ENCODE measurements at regions of chrX and their contacts with region 1.

Region 1: DNA sequence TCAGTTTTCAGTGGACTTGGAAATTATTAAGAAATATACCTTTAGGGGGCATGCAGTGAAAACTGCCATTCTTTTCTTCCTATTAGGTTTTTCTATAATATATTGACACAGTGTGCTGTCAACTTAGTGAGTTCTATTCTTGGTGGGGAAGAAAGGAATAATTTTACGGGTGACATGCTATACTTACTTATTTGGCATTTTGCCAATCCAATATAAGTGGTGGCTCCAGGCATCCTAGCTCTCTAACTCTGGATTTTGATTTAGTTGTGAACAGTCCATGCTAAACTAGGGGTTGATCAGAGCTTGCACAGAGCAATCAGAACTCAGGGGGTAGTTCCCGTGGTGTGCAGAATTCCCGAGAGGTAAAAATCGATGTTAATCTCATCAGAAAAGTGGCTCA is 277.7 kb upstream of the FTHL17 start:
- DNase-seq: no peak
- H3K4me3 ChIP-seq: no peak overlapping the region
- H3K27ac ChIP-seq: no peak overlapping the region
- H3K4me1 ChIP-seq: no peaks in the 10 kb centered on the region
- H3K27me3 ChIP-seq: peaks cover 0 to 17% of the 10 kb centered on the region in 2 donors
- CTCF ChIP-seq: no peak
- POLR2A ChIP-seq: no peak

Region 2: GRCh38 chrX:31307952-31308351 is 41.6 kb before region 1 on chrX:
- intact Hi-C with region 1: loop called (anchors 2 kb)
- DNase-seq: no peak
- H3K4me3 ChIP-seq: no peak overlapping the region
- H3K27ac ChIP-seq: no peak overlapping the region
- H3K4me1 ChIP-seq: no peaks in the 10 kb centered on the region
- H3K27me3 ChIP-seq: peaks cover 0 to 7% of the 10 kb centered on the region in 2 donors
- CTCF ChIP-seq: no peak
- POLR2A ChIP-seq: no peak

Measured in breast epithelium (tissue), 4 donors.